ENCODE measurements at regions of chr11 and their contacts with region 1.

Region 1: DNA sequence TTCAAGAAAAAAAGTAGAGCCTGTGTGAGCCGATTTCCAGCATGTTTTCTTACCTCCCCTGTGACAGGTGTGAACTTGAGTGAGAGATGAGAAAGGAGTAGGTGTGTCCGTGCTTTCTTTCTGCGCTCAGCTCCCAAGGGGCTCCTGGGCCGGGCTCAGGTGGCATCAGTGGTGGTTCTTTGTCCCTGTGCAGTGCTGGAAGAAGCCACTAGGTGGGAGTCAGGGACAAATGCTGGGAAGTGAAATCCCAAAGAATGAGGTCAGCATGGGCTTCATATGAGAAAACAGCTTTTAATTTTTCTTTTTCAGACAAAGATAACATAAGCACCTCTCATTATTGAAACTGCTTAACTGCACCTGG is 57.8 kb downstream of the PPFIBP2 start:
- H3K4me3 ChIP-seq: no peak overlapping the region
- H3K27ac ChIP-seq: no peak overlapping the region
- H3K4me1 ChIP-seq: no peaks in the 10 kb centered on the region
- CTCF ChIP-seq: peak; percentile 34; the same call in 1 of the 2 replicates

Region 2: DNA sequence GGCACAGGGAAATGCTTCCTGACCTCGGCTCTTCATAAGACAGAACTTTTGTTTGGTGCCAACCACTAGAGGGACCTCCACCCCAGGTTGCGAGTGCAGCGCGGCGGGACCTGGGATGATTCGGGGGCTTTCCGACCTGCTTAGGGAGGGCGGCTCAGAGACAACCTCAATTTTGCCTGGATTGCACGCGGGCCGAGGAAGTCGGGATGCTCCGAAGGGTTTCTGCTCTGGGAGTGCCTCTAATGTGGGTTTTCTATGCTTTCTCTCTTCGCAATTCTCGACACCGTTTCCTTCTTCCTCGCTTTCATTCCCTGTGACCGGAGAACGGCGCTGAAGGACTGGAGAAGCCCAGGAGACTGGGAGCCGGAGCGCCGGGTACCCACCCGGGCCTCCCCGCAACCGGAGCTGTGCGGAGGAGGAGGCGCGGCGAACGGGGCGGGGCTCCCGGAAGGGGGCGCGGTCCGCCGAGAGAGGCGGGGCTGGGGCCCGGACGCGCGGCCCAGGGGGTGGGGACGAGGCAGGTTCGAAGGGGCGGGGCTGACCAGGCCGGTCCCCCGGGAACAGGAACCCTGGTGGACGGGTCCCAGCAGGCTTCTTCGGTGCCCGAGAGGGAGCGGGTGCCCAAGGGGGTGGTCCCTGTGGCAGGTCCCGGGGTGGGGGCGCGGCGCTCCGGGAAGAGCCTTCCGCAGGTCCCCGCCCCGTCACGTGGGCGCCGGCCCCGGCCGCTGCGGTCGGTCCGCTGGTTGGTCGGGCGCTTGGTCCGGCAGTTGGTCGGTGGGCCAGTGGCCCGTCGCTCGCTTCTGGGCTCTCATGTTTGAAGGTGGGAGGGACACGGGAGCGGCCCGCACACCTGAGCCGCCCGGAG is 58.2 kb before region 1 on chr11 and contains the start of gene PPFIBP2:
- CTCF ChIA-PET with region 1: interaction called, 23 read pairs
- POLR2A ChIA-PET with region 1: no interaction called
- H3K4me3 ChIP-seq: peak within 1 kb of the TSS; percentile 82
- H3K27ac ChIP-seq: no peak within 1 kb of the TSS
- H3K4me1 ChIP-seq: no peaks in the 10 kb centered on the region
- CTCF ChIP-seq: peak; percentile 54

Region 3: DNA sequence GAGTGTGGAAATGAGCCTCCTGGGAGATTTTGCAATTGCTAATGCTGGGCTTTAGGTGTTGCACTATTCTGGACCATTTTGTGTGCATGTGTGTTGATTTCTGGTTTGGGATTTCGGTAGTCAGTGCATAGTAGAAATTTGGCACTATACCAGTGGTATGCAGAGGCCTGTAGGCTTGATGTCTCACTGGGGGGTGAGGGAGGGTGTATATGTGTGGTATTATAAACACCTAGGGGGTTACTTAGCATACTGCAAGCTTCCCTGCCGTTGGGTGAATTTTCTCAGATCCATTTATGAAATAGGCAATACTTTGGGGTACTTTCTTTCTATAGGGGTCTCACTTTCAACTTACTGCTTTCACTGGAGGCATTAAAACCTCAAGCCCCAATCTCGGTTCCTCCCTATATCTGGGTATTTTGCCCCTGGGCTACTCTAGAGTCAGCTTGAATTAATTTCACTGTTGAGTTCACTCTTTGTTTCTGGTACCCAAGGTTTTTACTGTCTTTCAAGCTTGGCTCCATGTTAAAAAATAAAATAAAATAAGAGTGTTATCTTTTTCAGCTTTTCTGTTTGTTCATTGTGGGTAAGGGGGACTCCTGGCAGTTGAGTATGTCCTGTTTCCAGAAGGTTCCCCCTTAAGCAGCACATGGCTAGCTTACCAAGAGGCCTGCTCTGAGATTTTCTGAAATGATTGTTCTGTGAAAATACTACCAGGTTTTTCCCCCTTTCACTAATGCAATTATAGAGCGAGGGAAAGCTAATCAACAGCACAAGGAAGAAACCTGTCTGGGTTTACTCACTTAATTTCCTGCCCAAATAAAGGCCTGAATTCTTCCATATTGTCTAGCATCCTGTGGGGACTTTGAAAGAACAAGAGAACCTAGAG is 12.0 kb before region 1 on chr11:
- CTCF ChIA-PET with region 1: interaction called, 23 read pairs
- POLR2A ChIA-PET with region 1: no interaction called
- H3K4me3 ChIP-seq: no peak overlapping the region
- H3K27ac ChIP-seq: no peak overlapping the region
- H3K4me1 ChIP-seq: no peaks in the 10 kb centered on the region
- CTCF ChIP-seq: no peak

Region 4: GRCh38 chr11:7587444-7588111 is 16.0 kb after region 1 on chr11:
- CTCF ChIA-PET with region 1: interaction called, 23 read pairs
- POLR2A ChIA-PET with region 1: no interaction called
- H3K4me3 ChIP-seq: no peak overlapping the region
- H3K27ac ChIP-seq: no peak overlapping the region
- H3K4me1 ChIP-seq: no peaks in the 10 kb centered on the region
- CTCF ChIP-seq: no peak

Region 5: GRCh38 chr11:7665473-7666291 is 94.1 kb after region 1 on chr11:
- CTCF ChIA-PET with region 1: interaction called, 46 read pairs
- POLR2A ChIA-PET with region 1: no interaction called
- H3K4me3 ChIP-seq: no peak overlapping the region
- H3K27ac ChIP-seq: no peak overlapping the region
- H3K4me1 ChIP-seq: no peaks in the 10 kb centered on the region
- CTCF ChIP-seq: peak; percentile 83; the same call in 1 of the 2 replicates

Region 6: DNA sequence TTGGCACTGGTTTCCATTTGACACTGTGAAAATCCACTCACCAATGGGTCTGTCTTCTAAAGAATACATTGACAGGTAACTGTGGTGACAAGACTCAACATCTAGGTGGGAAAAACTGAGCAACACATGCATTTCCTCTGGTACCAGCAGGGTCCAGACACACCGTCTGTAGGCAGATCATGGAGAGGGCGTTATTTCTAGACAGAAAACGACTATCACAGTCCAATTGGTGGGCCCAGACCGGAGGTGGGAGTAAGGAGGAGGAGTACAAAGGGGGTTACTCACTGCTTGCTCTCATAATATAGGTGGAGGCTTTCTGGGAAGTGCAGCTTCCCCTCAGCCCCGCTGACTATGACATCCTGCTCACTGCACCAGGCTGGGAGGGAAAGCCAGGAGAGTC is 124.8 kb after region 1 on chr11:
- CTCF ChIA-PET with region 1: interaction called, 26 read pairs
- POLR2A ChIA-PET with region 1: no interaction called
- H3K4me3 ChIP-seq: no peak overlapping the region
- H3K27ac ChIP-seq: no peak overlapping the region
- H3K4me1 ChIP-seq: no peaks in the 10 kb centered on the region; the same call in 1 of the 2 replicates
- CTCF ChIP-seq: no peak

Region 7: GRCh38 chr11:7775689-7776088 is 204.1 kb after region 1 on chr11:
- CTCF ChIA-PET with region 1: no interaction called
- POLR2A ChIA-PET with region 1: no interaction called
- H3K4me3 ChIP-seq: no peak overlapping the region
- H3K27ac ChIP-seq: no peak overlapping the region
- H3K4me1 ChIP-seq: no peaks in the 10 kb centered on the region
- CTCF ChIP-seq: no peak